ENCODE measurements at regions of chr3 and their contacts with region 1.

Region 1: DNA sequence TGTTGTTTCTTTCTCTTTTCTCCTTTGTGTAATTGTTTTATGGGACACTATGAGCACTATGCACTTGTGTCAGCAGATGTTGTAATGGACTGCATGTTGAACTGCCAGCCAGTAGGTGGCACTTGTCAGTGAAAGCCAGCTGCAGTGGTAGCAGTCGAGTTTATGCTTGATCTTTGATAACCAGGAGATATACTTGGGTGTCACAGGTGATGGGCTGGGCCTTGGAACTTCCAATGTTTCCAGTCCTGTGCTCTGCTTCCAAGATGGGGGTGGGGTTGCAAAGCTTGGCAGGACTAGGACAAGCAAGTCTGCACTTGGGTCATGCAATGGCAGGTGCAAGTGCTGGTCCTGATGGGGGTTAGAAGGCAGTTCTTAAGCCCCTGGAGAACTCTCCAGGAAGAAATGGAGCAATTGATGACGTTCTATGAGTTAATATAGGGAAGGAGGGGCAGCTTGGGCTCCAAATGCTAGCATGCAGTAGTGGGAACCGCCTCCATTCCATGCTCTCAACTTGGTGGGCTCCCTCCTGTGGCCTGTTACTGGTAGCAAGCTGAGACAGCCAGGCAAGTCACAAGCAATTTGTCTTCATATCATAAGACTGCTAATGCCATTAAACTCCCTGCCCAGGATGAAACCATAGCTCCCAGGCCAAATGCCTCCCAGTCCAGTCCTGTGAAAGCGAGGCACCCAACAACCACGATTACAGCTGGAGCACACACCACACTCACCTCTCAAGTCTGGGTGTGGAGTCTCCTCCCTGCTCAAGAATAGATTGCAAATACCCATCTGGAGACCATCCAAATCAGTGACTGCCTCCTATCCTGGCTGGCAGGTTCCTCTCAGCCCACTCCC is 287.2 kb downstream of the CGGBP1 start:
- DNase-seq: peak in 1 of 2 donors; percentile 4
- ATAC-seq: no peak
- H3K4me3 ChIP-seq: no peak overlapping the region
- H3K27ac ChIP-seq: no peak overlapping the region
- H3K4me1 ChIP-seq: no peaks in the 10 kb centered on the region
- H3K27me3 ChIP-seq: no peaks in the 10 kb centered on the region
- CTCF ChIP-seq: peak; percentile 15 to 69 (median 46)

Region 2: GRCh38 chr3:87997298-87997697 is 225.7 kb after region 1 on chr3:
- intact Hi-C with region 1: loop called in 4 of 10 experiments (anchors 5 to 10 kb)
- DNase-seq: no peak
- ATAC-seq: peak in 2 of 8 donors; percentile 51 to 54
- H3K4me3 ChIP-seq: peak overlapping the region in 1 of 10 donors; percentile 2
- H3K27ac ChIP-seq: peak overlapping the region in 1 of 10 donors; percentile 27
- H3K4me1 ChIP-seq: peaks cover 0 to 31% (median 0%) of the 10 kb centered on the region in 9 donors
- H3K27me3 ChIP-seq: peaks cover 0 to 8% (median 0%) of the 10 kb centered on the region in 7 donors
- CTCF ChIP-seq: no peak

Region 3: GRCh38 chr3:88113311-88114162 is 342.0 kb after region 1 on chr3:
- intact Hi-C with region 1: loop called in 1 of 10 experiments (anchors 10 kb)
- DNase-seq: peak in 1 of 2 donors; percentile 74
- ATAC-seq: peak; percentile 72 to 90 (median 82)
- H3K4me3 ChIP-seq: no peak overlapping the region
- H3K27ac ChIP-seq: no peak overlapping the region
- H3K4me1 ChIP-seq: peaks cover 0 to 18% (median 5%) of the 10 kb centered on the region in 9 donors
- H3K27me3 ChIP-seq: no peaks in the 10 kb centered on the region
- CTCF ChIP-seq: peak; percentile 51 to 89 (median 77)

Measured in heart right ventricle (tissue), 16 donors.